Activated CD8-positive, alpha-beta T cell treated with anti-CD3 and anti-CD28 coated beads for 36 hours (primary cell): ENCODE measurements at regions of chr12 and their contacts with region 1.

Region 1: GRCh38 chr12:15522565-15523187 is 200.4 kb downstream of the PTPRO start:
- DNase-seq: no peak
- ATAC-seq: no peak
- H3K4me3 Mint-ChIP-seq: no peak overlapping the region
- H3K27ac Mint-ChIP-seq: no peak overlapping the region
- H3K4me1 Mint-ChIP-seq: peaks cover 7% of the 10 kb centered on the region
- H3K27me3 Mint-ChIP-seq: peaks cover 20% of the 10 kb centered on the region
- CTCF ChIP-seq: peak; percentile 51

Region 2: GRCh38 chr12:15276088-15276698 is 246.5 kb before region 1 on chr12:
- CTCF ChIA-PET with region 1: interaction called, 10 read pairs
- POLR2A ChIA-PET with region 1: no interaction called
- intact Hi-C with region 1: loop called (anchors 2 kb)
- DNase-seq: no peak
- ATAC-seq: no peak
- H3K4me3 Mint-ChIP-seq: no peak overlapping the region
- H3K27ac Mint-ChIP-seq: no peak overlapping the region
- H3K4me1 Mint-ChIP-seq: peaks cover 9% of the 10 kb centered on the region
- H3K27me3 Mint-ChIP-seq: peaks cover 12% of the 10 kb centered on the region
- CTCF ChIP-seq: peak; percentile 79

Region 3: DNA sequence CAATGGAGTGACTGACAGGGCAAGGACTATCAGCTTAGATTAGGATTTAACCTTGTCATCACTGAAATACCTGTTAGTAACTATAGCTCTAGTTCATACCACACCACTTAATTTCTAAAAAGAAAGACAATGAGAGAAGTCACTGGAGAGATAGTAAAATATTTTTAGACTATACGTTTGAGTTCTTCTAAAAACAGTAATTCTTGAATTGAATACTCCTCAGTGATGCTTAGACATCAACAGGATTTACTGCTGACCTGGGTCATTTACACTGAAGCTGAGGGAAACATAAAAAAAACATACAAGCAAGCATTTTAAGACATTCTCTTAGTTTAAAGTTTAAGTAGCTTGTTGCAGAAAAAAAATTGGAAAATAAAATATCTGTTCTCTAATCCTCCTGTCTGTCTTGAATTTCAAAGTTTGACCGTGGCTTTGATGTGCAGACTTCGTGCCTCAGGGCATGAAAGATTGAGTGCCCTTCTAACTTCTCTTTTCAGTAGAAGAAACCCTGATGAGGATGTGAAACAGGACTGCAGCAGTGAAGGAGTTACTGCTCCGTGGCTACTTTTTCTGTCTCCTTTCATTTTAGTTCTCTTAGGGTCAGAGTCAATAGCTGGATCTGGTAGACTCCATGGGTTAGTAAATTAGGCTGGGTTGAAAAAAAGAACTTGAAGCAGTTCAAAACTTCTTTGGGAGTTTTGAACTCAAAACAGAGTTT is 28.2 kb before region 1 on chr12:
- CTCF ChIA-PET with region 1: no interaction called
- POLR2A ChIA-PET with region 1: no interaction called
- intact Hi-C with region 1: no loop called
- DNase-seq: no peak
- ATAC-seq: no peak
- H3K4me3 Mint-ChIP-seq: no peak overlapping the region
- H3K27ac Mint-ChIP-seq: no peak overlapping the region
- H3K4me1 Mint-ChIP-seq: no peaks in the 10 kb centered on the region
- H3K27me3 Mint-ChIP-seq: peaks cover 10% of the 10 kb centered on the region
- CTCF ChIP-seq: no peak

Region 4: GRCh38 chr12:15505616-15506015 is 17.1 kb before region 1 on chr12:
- CTCF ChIA-PET with region 1: no interaction called
- POLR2A ChIA-PET with region 1: no interaction called
- intact Hi-C with region 1: no loop called
- DNase-seq: no peak
- ATAC-seq: no peak
- H3K4me3 Mint-ChIP-seq: no peak overlapping the region
- H3K27ac Mint-ChIP-seq: no peak overlapping the region
- H3K4me1 Mint-ChIP-seq: no peaks in the 10 kb centered on the region
- H3K27me3 Mint-ChIP-seq: peaks cover 11% of the 10 kb centered on the region
- CTCF ChIP-seq: no peak